Activated B cell treated with CpG ODN at 0.5 μM for 24 hours (primary cell): ENCODE measurements at regions of chrX and their contacts with region 1.

Region 1: GRCh38 chrX:72181178-72182125 is at the start of gene PIN4:
- DNase-seq: peak; percentile 67
- ATAC-seq: peak; percentile 93
- H3K4me3 Mint-ChIP-seq: no peak within 1 kb of the TSS
- H3K27ac Mint-ChIP-seq: no peak within 1 kb of the TSS
- H3K4me1 Mint-ChIP-seq: peaks cover 11% of the 10 kb centered on the region
- H3K27me3 Mint-ChIP-seq: no peaks in the 10 kb centered on the region
- CTCF ChIP-seq: no peak
- total RNA-seq, gene PIN4: 10.1 and 10.9 TPM in 2 replicates

Region 2: DNA sequence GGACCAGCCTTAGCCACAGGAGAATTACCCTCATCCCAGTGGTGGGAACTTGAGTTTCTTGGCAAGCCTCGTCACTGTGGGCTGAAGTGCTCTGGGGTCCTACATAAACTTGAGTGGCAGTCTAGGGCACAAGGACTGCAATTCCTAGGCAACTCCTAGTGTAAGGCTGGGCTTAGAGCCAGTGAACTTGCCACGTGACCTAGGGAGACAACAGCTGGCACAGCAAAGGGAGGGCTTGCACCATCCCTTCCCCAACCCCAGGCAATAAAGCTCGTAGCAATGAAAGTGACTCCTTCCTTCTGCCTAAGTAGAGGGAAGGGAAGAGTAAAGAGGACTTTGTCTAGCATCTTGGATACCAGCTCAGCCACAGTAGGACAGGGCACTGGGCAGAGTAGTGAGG is 1354.7 kb before region 1 on chrX:
- CTCF ChIA-PET with region 1: no interaction called
- POLR2A ChIA-PET with region 1: no interaction called
- intact Hi-C with region 1: no loop called
- DNase-seq: no peak
- ATAC-seq: no peak
- H3K4me3 Mint-ChIP-seq: no peak overlapping the region
- H3K27ac Mint-ChIP-seq: no peak overlapping the region
- H3K4me1 Mint-ChIP-seq: no peaks in the 10 kb centered on the region
- H3K27me3 Mint-ChIP-seq: peaks cover 9% of the 10 kb centered on the region
- CTCF ChIP-seq: no peak

Region 3: DNA sequence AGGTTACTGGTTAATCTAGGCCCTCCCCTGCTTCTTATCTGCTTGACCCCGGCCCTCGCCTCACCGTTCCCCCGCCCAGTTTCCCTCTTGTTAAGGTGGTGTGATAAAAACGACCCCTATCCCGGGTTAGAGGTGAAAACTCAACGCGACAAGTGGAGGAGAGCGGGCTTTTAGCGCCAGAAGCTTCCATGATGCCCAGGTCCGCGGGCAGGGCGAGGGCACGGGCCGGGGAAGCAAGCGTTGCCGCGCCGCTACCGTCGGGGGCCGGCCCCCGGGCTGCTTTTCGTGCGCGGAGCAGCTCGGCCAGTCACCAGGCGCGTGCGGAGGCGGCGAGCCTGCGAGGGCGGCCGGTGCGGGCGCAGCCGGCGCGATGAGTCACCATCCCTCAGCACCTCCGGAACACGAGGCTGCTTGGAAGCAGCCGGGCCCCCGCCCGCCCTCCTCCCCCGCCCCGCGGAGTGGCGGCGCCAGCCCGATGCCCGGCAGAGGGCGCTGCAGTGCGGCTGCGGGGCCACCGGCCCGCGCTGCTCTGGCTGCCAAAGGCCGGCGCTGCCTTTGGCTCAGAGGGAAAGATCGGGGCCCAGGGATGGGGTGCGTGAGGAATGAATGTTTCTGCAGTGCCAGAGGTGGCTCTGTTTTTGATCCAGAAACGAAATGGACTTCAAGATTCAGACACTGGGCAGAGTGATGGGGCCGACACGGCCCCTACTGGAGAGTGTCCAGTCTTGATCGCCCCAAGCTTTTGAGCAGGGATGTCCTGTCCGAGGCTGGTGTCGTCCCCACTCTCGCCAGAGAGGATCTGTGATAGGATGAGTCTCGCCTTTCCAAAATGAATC is 163.0 kb before region 1 on chrX:
- CTCF ChIA-PET with region 1: interaction called, 3 read pairs
- POLR2A ChIA-PET with region 1: interaction called, 3 read pairs
- intact Hi-C with region 1: loop called (anchors 5 kb)
- DNase-seq: peak; percentile 65
- ATAC-seq: peak; percentile 89
- H3K4me3 Mint-ChIP-seq: peak overlapping the region; percentile 38
- H3K27ac Mint-ChIP-seq: no peak overlapping the region
- H3K4me1 Mint-ChIP-seq: peaks cover 10% of the 10 kb centered on the region
- H3K27me3 Mint-ChIP-seq: peaks cover 5% of the 10 kb centered on the region
- CTCF ChIP-seq: no peak

Region 4: DNA sequence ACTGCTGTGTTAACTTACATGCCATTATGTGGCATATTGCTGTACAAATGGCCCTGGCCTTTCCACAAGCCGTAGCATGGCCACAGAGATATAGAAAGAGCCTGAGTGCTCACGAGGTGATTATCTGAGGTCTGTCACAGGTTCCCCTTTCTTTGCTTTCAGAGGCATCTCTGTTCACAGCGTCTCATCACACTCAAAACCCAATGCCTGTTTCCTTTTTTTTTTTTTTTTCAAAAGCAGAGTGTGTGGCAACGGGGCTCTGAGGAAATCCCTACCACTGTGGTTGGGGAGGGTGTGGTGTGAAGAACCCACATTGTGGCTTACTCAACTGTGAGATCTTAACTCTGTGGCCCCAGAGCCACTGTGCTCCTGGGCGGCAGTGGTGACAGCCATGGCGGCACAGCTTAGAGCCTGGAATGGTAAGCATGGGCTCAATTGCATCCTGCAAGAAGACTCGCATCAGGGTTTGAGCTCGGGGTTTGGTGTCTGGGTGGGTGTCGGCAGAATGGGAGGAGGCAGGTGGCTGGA is 80.6 kb before region 1 on chrX:
- CTCF ChIA-PET with region 1: no interaction called
- POLR2A ChIA-PET with region 1: no interaction called
- intact Hi-C with region 1: loop called (anchors 1 kb)
- DNase-seq: peak; percentile 35
- ATAC-seq: peak; percentile 80
- H3K4me3 Mint-ChIP-seq: peak overlapping the region; percentile 38
- H3K27ac Mint-ChIP-seq: peak overlapping the region; percentile 79
- H3K4me1 Mint-ChIP-seq: peaks cover 62% of the 10 kb centered on the region
- H3K27me3 Mint-ChIP-seq: peaks cover 2% of the 10 kb centered on the region
- CTCF ChIP-seq: no peak

Region 5: GRCh38 chrX:72201836-72202536 is 20.5 kb after region 1 on chrX:
- CTCF ChIA-PET with region 1: no interaction called
- POLR2A ChIA-PET with region 1: no interaction called
- intact Hi-C with region 1: no loop called
- DNase-seq: no peak
- ATAC-seq: no peak
- H3K4me3 Mint-ChIP-seq: no peak overlapping the region
- H3K27ac Mint-ChIP-seq: no peak overlapping the region
- H3K4me1 Mint-ChIP-seq: no peaks in the 10 kb centered on the region
- H3K27me3 Mint-ChIP-seq: no peaks in the 10 kb centered on the region
- CTCF ChIP-seq: no peak

Region 6: DNA sequence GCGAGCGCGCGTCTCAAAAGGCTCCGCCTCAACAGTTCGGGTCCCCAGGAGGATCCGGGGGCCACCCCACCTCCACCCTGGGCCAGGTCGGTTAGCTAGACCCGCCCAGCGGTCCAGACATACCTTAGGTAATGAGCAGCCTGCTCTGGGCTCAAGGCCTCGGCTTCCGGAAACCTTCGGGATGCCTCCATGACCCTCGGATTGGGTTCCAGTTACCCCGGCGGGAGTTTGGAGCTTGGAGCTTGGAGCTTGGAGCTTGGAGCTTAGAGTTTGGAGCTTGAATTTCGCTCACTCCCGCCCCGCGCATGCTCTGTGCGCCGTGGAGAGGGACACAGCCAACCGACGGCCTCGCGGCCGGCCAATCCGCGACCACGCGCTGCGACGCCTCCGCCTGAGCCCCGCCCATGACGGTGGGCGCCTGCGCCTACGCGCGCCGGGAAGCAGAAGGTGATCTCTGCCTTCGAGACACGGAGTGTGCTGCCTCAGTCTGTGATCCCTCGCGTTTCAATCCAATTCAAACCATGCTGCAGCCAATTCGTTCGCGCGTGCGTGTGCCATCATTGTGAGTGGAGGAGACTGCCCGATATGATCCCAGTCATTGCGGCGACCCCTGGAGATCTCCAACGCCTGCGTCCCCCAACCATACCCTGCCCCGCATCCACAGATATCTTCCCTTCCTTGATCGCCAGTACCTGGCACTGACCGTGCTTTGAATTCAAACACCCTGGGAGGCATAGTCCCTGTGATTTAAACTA is 57.4 kb after region 1 on chrX and contains the start of gene ERCC6L:
- CTCF ChIA-PET with region 1: no interaction called
- POLR2A ChIA-PET with region 1: interaction called, 8 read pairs
- intact Hi-C with region 1: loop called (anchors 1 kb)
- DNase-seq: peak; percentile 76
- ATAC-seq: peak; percentile 99
- H3K4me3 Mint-ChIP-seq: peak within 1 kb of the TSS; percentile 80
- H3K27ac Mint-ChIP-seq: peak within 1 kb of the TSS; percentile 79
- H3K4me1 Mint-ChIP-seq: peaks cover 3% of the 10 kb centered on the region
- H3K27me3 Mint-ChIP-seq: no peaks in the 10 kb centered on the region
- CTCF ChIP-seq: no peak
- total RNA-seq, gene ERCC6L: 0.91 and 1.1 TPM in 2 replicates

Region 7: GRCh38 chrX:72276478-72276953 is 95.1 kb after region 1 on chrX:
- CTCF ChIA-PET with region 1: no interaction called
- POLR2A ChIA-PET with region 1: interaction called, 21 read pairs
- intact Hi-C with region 1: loop called (anchors 1 kb)
- DNase-seq: no peak
- ATAC-seq: no peak
- H3K4me3 Mint-ChIP-seq: peak overlapping the region; percentile 88
- H3K27ac Mint-ChIP-seq: peak overlapping the region; percentile 76
- H3K4me1 Mint-ChIP-seq: peaks cover 29% of the 10 kb centered on the region
- H3K27me3 Mint-ChIP-seq: no peaks in the 10 kb centered on the region
- CTCF ChIP-seq: no peak

Region 8: DNA sequence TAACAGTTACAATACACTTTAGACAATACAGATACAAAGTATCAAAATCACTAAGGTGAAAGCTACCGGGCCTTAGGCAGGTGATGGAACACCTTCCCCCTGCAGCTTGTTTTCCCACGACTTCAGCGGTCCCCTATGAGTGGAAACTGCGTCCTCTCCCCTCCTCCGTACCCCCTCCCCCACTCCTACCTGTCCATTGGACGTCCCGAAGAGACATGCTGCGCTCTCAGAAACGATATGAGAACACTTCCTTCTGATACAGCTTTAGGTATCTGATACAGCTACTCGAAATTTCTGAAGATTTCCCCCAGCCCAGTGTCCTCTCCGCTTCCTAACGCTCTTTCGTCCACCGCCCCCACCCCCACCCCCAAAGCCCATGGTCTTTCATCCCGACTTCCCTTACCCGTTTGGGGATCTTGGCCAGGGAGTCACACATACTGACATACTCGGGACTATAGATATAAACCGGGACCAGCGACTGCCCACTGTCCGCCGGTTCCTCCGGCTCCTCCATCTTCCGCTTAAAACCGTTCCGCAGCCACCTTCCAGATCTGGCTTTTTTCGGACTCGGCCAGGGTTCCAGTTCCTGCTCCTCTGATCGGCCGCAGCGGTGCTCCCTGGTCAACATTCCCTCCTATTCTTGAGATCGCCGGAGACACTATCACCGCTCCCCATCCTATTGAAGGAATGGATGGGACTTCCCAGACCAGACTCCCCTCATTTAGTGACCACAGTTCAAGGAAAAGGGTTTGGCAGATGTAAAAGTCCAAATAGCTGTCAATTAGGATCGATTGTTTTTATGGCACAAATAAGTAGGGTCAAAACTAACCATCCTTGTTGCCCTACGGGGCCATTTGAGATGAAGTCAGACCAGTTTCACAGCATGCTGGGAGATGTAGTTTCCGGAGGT is 391.1 kb after region 1 on chrX and contains the start of gene HDAC8:
- CTCF ChIA-PET with region 1: no interaction called
- POLR2A ChIA-PET with region 1: no interaction called
- intact Hi-C with region 1: loop called (anchors 2 kb)
- DNase-seq: peak; percentile 16
- ATAC-seq: peak; percentile 84
- H3K4me3 Mint-ChIP-seq: peak within 1 kb of the TSS; percentile 98
- H3K27ac Mint-ChIP-seq: peak within 1 kb of the TSS; percentile 84
- H3K4me1 Mint-ChIP-seq: peaks cover 7% of the 10 kb centered on the region
- H3K27me3 Mint-ChIP-seq: peaks cover 4% of the 10 kb centered on the region
- CTCF ChIP-seq: no peak
- total RNA-seq, gene HDAC8: 29.0 and 39.6 TPM in 2 replicates